SK-N-SH (cell line): ENCODE measurements at regions of chr17 and their contacts with region 1.

Region 1: DNA sequence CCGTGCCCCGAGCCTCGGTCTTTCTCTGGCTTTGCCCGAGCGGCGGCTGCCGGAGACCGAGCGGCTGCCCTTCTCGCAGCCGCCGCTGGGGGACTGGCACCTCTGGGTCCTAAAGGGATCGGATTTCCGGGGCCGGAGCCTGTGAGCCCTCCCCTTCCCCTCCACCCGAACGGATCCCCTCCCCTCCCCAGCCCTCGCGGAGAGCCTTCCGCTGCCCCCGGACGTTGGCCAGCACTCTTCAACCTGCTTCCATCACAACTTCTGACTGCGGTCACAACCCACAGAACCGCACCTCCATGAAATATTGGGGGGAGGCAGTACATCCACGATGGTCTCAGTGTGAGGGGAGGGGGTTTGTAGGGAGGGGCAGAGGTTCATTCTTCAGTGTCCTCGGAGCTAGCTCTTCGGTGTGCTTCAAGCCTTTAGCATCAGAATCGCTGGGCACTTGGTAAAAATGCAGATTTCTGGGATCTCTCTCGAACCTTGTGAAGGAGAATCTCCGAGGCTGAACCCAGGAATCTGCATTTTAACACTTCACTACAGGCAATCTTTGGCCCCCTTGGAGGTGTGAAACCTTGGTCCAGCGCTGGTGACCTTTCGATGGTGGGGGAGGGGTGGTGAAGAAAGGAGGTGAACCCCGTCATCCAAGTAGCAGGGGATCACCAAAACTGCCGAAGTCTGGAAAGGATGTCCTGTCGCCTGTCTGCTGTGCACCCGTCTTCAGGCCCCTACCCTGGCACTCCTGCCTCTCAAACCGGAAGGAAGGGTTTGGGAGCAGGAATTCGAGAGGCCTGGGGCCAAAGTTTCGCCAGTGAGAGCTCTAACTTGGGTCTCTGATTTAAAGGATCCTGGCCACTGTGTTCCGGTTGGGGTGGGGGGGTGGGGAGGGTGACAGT is 812 bp upstream of the PPP1R9B start:
- DNase-seq: peak; percentile 99
- H3K4me3 ChIP-seq: peak overlapping the region; percentile 66 to 81
- H3K27ac ChIP-seq: peak overlapping the region; percentile 74 to 98
- H3K4me1 ChIP-seq: peaks cover 39 to 60% of the 10 kb centered on the region in 2 experiments; a peak in 3 of 4 replicates
- H3K27me3 ChIP-seq: no peaks in the 10 kb centered on the region
- CTCF ChIP-seq: peak; percentile 63
- EP300 ChIP-seq: peak in 1 of 2 experiments; percentile 34; a peak in 1 of 4 replicates
- RAD21 ChIP-seq: peak; percentile 19; the same call in 1 of the 2 replicates

Region 2: DNA sequence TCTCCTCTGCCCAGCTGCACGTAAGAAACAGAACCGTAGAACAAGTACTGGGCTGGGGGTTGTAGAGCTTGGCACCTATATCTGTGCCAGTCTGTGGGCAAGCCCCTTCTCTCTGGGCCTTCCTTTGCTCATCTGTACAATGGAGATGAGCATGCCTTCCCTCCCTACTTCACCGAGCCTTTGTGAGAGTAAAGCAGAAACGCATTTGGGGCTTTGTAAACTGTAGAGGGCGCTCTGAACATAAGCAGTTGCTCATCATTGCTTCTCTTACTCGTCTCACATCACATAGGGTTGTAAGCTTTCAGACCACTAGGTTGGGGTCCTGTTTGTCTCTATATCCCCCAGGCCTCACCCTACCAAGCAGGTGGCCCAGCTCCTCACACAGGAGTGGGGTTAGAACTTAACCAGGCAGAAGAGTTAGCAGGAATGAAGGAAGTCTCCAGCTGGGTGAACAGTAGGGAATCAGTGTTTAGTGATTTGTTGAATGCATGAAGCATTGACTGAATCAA is 36.4 kb before region 1 on chr17:
- CTCF ChIA-PET with region 1: interaction called, 66 read pairs
- POLR2A ChIA-PET with region 1: interaction called, 3 read pairs
- DNase-seq: peak; percentile 79
- H3K4me3 ChIP-seq: no peak overlapping the region
- H3K27ac ChIP-seq: no peak overlapping the region
- H3K4me1 ChIP-seq: peaks cover 0 to 24% of the 10 kb centered on the region in 2 experiments; a peak in 1 of 4 replicates
- H3K27me3 ChIP-seq: no peaks in the 10 kb centered on the region
- CTCF ChIP-seq: peak; percentile 93
- EP300 ChIP-seq: no peak
- RAD21 ChIP-seq: peak; percentile 75

Region 3: DNA sequence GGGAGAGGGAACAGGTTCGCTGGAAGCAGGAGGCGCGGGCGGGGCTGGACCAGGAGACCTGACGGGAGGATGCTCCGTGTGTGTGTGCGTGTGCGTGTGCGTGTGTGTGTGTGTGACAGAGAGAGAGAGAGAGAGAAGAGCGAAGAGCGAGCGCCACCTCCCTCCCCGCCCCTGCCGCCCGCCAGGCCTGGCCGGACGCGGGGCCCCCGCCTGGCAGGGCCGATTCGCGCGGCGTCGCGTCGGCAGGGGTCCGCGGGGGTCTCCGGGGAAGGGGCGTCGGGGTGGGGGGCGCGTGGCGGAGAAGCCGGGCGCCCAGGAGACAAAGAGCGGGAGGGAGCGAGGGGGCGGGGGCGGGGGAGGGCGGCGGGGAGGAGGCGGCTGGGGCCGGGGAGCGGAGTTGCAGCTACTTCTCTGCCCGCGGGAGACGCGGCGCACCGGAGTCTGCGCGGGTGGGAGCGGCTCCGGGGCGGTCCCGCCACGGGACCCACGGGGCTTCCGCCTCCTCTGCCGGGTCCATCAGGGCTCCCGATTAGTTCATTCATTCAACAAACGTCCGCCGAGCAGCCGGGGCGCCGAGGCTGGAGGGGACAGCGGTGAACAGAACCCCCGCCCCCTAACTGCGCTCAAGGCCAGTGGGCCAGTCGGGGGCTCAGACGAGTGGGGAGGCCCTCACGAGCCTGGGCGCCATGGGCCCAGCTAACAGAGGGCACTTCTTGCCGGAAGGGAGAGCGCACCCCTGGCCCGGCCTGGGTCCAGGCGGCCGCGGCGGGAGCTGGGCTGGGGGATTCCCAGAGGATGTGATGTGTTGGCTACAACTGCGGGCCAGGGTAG is 21.3 kb before region 1 on chr17 and contains the start of gene SAMD14:
- CTCF ChIA-PET with region 1: interaction called, 169 read pairs
- POLR2A ChIA-PET with region 1: interaction called, 5 read pairs
- DNase-seq: peak; percentile 96
- H3K4me3 ChIP-seq: peak within 1 kb of the TSS; percentile 61 to 70
- H3K27ac ChIP-seq: peak within 1 kb of the TSS in 1 of 2 experiments; percentile 69; a peak in 1 of 4 replicates
- H3K4me1 ChIP-seq: peaks cover 20 to 23% of the 10 kb centered on the region in 2 experiments; a peak in 3 of 4 replicates
- H3K27me3 ChIP-seq: no peaks in the 10 kb centered on the region
- CTCF ChIP-seq: no peak
- EP300 ChIP-seq: no peak
- RAD21 ChIP-seq: no peak
- polyA plus RNA-seq, gene SAMD14: 2.8 and 3.4 TPM in 2 replicates

Region 4: DNA sequence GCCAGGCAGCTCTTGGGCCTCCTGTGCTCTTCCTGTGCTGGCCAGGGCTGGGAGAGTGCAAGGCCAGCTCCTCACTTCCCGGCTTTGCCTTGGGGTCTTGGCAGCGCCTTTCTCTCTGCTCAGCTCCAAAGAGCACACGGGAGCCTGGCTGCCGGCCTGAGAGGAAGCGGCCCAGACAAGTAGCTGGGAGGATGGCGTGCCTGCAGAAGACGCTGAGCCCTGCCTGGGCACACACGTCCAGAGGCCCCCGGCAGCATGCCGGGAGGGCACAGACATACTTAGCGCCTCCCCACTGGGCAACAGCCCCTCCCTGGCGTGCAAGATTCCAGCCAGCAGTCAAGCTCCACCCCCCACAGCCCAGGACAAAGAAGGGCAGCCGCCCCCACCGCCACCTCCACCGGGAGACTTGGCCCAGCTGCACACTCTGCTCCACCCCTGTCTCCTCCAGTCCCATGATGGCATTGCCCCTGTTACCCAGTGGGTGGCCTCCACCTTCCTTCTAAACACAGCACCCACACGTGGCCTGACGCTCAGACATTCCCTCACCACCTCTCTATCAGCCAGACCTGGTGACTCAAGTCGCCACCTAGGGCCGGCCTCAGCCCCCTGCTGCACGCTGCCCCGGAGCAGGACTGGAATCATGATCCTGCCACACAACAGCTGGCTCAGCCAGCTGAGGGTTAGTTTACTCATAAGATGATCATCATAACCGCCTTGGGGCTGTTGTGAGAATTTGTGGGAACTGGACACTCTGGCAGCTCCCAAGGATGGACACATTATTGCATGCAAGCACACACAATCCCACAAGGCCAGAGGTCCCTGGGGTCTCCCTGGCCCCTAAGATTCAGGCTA is 26.9 kb after region 1 on chr17:
- CTCF ChIA-PET with region 1: interaction called, 26 read pairs
- POLR2A ChIA-PET with region 1: interaction called, 7 read pairs
- DNase-seq: peak; percentile 93
- H3K4me3 ChIP-seq: peak overlapping the region in 1 of 2 experiments; percentile 15; a peak in 1 of 4 replicates
- H3K27ac ChIP-seq: peak overlapping the region; percentile 94 to 100
- H3K4me1 ChIP-seq: peaks cover 29 to 52% of the 10 kb centered on the region in 2 experiments; a peak in 3 of 4 replicates
- H3K27me3 ChIP-seq: no peaks in the 10 kb centered on the region
- CTCF ChIP-seq: peak; percentile 77
- EP300 ChIP-seq: peak; percentile 27 to 36; a peak in 2 of 4 replicates
- RAD21 ChIP-seq: peak; percentile 53